ENCODE measurements at regions of chr2 and their contacts with region 1.

Region 1: DNA sequence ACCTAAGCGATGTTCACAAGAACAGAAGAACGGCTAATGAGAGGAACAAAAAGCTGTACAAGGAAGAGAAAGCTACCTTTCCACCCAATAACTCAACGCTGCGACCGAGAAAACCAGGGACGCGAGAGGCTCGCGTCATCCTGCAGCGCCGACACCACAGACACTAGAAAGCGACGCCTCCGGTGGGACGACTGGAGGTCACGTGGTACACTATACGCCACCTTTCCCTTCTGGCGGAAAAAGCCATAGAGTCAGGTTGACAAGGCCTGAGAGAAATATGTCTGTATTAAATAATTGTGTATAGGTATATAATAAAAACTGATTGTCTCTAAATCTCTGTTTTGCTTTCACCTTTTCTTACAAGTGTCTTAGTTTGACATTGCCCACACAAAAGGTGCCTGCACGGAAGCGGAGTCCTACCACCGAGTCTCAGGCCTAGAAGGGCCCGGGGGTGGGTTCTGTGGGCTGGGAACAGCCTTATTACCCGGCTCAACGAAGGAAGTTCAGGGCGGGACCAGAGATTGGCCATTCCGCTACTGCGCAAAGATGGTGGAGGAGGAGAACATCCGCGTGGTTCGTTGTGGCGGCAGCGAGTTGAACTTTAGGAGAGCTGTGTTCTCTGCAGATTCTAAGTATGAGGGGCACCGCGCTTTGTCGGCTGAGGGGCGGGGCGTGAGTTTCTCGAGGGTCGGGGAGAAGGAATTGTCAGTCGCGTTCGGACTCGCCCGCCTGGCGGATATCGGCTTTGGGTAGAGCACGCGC is at the start of gene WDR75:
- DNase-seq: peak; percentile 95
- H3K4me3 Mint-ChIP-seq: no peak within 1 kb of the TSS
- H3K27ac Mint-ChIP-seq: peak within 1 kb of the TSS; percentile 97
- H3K4me1 Mint-ChIP-seq: peaks cover 12% of the 10 kb centered on the region
- H3K27me3 Mint-ChIP-seq: no peaks in the 10 kb centered on the region
- total RNA-seq, gene WDR75: 69.7 to 72.7 TPM

Region 2: DNA sequence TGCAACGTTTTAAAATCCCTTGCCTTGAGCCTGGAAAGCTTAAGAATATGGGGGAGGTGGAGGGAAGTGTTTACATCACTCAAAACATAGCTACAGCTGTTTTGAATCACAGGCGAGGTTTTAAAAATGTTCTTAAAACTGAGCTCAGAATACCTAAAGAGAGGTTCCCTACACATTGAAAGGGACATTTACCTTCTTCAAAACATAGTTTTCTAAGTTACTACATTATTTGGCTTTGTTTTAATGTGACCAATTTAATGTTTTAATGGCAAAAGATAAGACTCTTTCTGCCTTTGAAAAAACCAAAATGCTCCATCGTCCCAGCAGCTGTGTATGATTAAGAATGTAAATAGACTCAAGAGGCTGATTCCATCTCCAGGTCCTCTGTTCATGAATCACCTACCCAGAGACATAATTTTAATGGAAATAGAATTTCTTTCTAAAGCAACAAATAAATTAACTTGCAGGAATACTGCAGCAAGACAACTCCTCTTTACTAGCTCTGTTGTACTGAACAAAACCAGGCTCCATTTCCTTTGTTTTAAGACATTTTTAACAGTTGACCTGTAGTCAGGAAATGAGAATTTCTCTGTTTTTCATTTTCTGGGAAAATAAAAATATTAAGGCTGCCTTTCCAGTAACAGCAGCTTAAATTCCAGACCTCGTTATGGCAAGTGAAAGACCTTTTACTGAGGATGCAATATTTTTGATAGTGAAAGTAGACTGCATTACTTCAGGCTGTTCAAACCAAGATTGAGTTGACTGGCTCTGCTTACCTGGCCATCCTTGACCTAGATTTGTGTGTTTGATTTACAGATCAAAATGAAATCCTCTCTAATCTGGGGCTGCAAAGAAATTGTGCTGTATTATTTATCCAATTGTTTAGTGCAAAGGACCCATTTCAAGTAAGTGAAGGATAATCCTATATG is 33.6 kb before region 1 on chr2:
- CTCF ChIA-PET with region 1: no interaction called
- intact Hi-C with region 1: no loop called
- DNase-seq: no peak
- H3K4me3 Mint-ChIP-seq: no peak overlapping the region
- H3K27ac Mint-ChIP-seq: no peak overlapping the region
- H3K4me1 Mint-ChIP-seq: peaks cover 29% of the 10 kb centered on the region
- H3K27me3 Mint-ChIP-seq: no peaks in the 10 kb centered on the region

Region 3: DNA sequence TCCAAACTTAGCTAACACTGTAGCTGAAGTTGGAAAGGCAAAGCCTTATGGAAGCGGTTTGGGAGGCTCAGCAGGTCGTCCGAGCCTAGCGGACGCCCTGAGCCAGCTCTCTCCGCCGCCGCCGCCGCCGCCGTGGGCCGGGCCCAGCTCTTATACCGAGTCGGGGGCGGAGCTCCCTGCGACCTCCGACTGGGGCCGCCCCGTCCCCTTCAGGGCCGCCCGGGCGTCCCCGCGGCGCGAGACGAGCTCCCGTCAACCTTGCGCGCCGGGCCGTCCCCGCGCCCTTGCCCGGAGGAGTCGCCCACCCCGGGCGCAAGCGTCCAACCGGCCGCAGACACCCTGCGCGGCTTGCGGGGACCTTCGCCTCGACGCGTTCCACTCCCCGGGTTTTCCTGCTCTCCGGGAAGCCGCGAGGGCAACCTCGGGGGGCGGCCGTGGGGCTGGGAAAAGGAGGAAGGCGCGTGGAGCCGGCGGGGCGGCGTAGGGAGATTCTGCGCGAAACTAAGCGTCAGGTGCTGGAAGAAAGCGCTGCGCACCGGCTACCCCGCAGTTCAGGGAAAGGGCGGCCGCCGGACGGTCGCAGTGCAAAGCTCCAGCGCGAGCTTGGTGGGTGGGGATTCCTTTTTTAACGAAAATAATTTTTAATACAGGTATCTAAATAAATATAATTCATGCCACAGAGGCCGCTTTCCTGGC is 139.7 kb after region 1 on chr2 and contains the start of gene SLC40A1:
- CTCF ChIA-PET with region 1: no interaction called
- intact Hi-C with region 1: loop called (anchors 1 kb)
- DNase-seq: peak; percentile 67
- H3K4me3 Mint-ChIP-seq: peak within 1 kb of the TSS; percentile 85
- H3K27ac Mint-ChIP-seq: peak within 1 kb of the TSS; percentile 82
- H3K4me1 Mint-ChIP-seq: peaks cover 44% of the 10 kb centered on the region
- H3K27me3 Mint-ChIP-seq: peaks cover 5% of the 10 kb centered on the region
- total RNA-seq, gene SLC40A1: 3.8 to 4.1 TPM

Region 4: DNA sequence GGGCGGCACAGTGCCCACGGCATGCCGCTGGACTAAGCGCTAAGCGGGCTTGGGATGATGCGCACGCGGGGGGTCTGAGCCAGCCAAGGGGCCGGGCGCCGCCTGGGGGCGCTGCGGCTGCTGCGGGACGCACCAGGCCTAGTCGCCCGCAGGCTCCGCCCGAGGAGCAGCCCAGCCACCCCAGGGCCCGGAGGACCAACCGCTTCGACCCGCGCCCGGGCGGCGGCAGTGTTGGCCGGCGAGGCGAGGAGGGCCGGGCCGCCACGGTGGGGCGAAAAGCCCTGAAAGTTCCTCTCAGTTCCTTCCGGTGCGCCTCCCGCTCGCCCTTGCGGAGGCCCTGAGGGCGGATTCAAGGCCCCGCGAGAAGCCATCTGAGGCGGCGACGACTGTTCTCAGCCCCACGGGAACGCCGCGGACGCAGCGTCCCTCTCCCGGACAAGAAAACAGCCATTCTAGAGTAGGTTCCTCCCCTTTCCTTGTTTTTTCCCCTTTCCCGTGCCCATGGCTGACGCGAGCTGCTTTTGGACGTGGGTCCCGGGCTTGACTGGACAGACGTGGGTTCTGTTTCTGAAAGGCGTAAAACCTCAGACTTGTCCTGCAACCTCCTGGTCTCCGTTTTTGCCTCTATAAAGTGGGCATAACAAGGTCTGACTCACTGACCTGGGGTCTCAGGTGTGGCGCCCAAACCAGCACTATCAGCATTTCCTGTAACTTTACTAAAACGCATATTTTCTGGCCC is 233.4 kb after region 1 on chr2 and contains the start of gene ANKAR:
- CTCF ChIA-PET with region 1: no interaction called
- intact Hi-C with region 1: loop called (anchors 1 kb)
- DNase-seq: peak; percentile 78
- H3K4me3 Mint-ChIP-seq: peak within 1 kb of the TSS; percentile 89
- H3K27ac Mint-ChIP-seq: peak within 1 kb of the TSS; percentile 94
- H3K4me1 Mint-ChIP-seq: peaks cover 35% of the 10 kb centered on the region
- H3K27me3 Mint-ChIP-seq: no peaks in the 10 kb centered on the region
- total RNA-seq, gene ANKAR: 1.6 to 2.5 TPM

Region 5: DNA sequence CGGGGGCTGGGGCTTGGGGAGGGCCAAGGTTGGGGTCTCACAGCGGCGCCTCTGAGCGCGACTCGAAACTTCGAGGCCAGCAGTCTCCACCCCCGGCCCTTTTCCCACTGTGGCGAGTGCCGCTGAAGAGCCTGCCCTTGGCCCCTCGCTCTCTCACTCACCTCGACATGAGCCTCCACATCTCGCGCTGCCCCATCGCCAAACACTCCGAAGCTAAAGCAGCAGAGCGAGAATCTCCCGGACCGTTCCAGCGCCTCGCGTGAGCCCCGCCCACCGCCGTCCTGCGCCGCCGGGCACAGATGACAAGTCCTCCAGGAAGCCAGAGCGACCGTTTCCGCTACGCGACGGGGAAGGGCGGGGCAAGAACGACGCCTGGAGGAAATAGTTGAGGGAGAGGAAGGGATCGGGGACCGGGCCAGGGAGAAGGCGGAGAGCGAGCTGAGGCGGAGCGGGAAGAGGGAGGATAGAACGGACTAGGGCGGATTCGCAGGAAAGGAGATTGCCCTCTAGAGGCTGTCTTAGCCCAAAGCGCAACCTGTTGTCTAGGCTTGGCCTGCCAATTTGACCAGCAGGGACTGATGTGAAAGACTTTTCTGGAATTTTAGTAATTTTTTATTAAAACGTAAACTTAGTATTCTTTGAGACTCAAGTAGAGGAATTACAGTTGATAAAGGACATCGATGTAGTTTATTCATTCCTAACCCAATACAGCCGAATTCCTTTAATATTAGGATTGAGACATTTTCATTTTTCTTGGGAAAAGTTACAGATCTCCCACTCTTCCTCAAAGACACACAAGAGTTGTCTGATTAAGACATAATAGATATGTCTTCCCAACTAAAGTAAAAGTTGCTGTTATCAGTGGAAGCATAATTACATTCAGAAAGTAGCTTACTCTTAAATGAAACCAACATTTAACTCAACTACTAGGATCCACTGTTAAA is 878.7 kb after region 1 on chr2 and contains the start of gene HIBCH:
- CTCF ChIA-PET with region 1: no interaction called
- intact Hi-C with region 1: loop called (anchors 5 kb)
- DNase-seq: peak; percentile 94
- H3K4me3 Mint-ChIP-seq: peak within 1 kb of the TSS; percentile 91
- H3K27ac Mint-ChIP-seq: peak within 1 kb of the TSS; percentile 88
- H3K4me1 Mint-ChIP-seq: peaks cover 39% of the 10 kb centered on the region
- H3K27me3 Mint-ChIP-seq: no peaks in the 10 kb centered on the region
- total RNA-seq, gene HIBCH: 19.2 TPM